MCF 10A (cell line): ENCODE measurements at regions of chr21 and their contacts with region 1.

Region 1: GRCh38 chr21:16330082-16330907 is 600.5 kb downstream of the USP25 start:
- DNase-seq: peak; percentile 77
- H3K4me3 Mint-ChIP-seq: no peak overlapping the region
- H3K27ac Mint-ChIP-seq: no peak overlapping the region
- H3K4me1 Mint-ChIP-seq: peaks cover 5% of the 10 kb centered on the region
- H3K27me3 Mint-ChIP-seq: no peaks in the 10 kb centered on the region
- CTCF ChIP-seq: peak; percentile 42

Region 2: GRCh38 chr21:15874615-15875014 is 455.7 kb before region 1 on chr21:
- CTCF ChIA-PET with region 1: no interaction called
- POLR2A ChIA-PET with region 1: no interaction called
- intact Hi-C with region 1: no loop called
- DNase-seq: no peak
- H3K4me3 Mint-ChIP-seq: no peak overlapping the region
- H3K27ac Mint-ChIP-seq: no peak overlapping the region
- H3K4me1 Mint-ChIP-seq: no peaks in the 10 kb centered on the region
- H3K27me3 Mint-ChIP-seq: no peaks in the 10 kb centered on the region
- CTCF ChIP-seq: no peak

Region 3: GRCh38 chr21:16002874-16003466 is 327.3 kb before region 1 on chr21:
- CTCF ChIA-PET with region 1: interaction called, 9 read pairs
- POLR2A ChIA-PET with region 1: no interaction called
- intact Hi-C with region 1: loop called (anchors 1 kb)
- DNase-seq: peak; percentile 18
- H3K4me3 Mint-ChIP-seq: no peak overlapping the region
- H3K27ac Mint-ChIP-seq: no peak overlapping the region
- H3K4me1 Mint-ChIP-seq: no peaks in the 10 kb centered on the region
- H3K27me3 Mint-ChIP-seq: no peaks in the 10 kb centered on the region
- CTCF ChIP-seq: peak; percentile 31

Region 4: GRCh38 chr21:16082038-16082816 is 248.1 kb before region 1 on chr21:
- CTCF ChIA-PET with region 1: interaction called, 48 read pairs
- POLR2A ChIA-PET with region 1: interaction called, 7 read pairs
- intact Hi-C with region 1: loop called (anchors 1 kb)
- DNase-seq: peak; percentile 17
- H3K4me3 Mint-ChIP-seq: no peak overlapping the region
- H3K27ac Mint-ChIP-seq: no peak overlapping the region
- H3K4me1 Mint-ChIP-seq: peaks cover 7% of the 10 kb centered on the region
- H3K27me3 Mint-ChIP-seq: peaks cover 11% of the 10 kb centered on the region
- CTCF ChIP-seq: peak; percentile 29

Region 5: GRCh38 chr21:16342932-16343331 is 12.6 kb after region 1 on chr21:
- CTCF ChIA-PET with region 1: interaction called, 10 read pairs
- POLR2A ChIA-PET with region 1: interaction called, 3 read pairs
- intact Hi-C with region 1: no loop called
- DNase-seq: no peak
- H3K4me3 Mint-ChIP-seq: no peak overlapping the region
- H3K27ac Mint-ChIP-seq: no peak overlapping the region
- H3K4me1 Mint-ChIP-seq: no peaks in the 10 kb centered on the region
- H3K27me3 Mint-ChIP-seq: peaks cover 9% of the 10 kb centered on the region
- CTCF ChIP-seq: no peak

Region 6: DNA sequence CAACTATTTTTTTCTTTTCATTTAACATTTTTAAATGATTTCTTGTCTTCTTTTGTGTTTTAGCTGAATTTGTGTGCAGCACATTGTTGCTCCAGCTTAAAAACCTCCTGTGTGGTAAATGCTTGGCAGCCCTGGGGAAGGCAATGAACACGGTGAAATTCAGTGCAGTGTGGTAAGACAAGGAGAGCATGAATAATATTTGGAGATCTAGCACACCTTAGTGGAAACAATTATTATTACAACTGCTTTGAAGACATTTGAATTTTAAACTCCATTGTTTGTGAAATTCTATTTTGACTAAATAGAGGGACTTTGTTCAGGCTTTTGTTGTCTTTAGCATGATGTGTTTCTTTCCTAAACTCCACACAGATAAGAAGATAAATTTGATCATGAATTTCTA is 939.9 kb after region 1 on chr21:
- CTCF ChIA-PET with region 1: interaction called, 4 read pairs
- POLR2A ChIA-PET with region 1: no interaction called
- intact Hi-C with region 1: loop called (anchors 5 kb)
- DNase-seq: peak; percentile 52
- H3K4me3 Mint-ChIP-seq: no peak overlapping the region
- H3K27ac Mint-ChIP-seq: no peak overlapping the region
- H3K4me1 Mint-ChIP-seq: no peaks in the 10 kb centered on the region
- H3K27me3 Mint-ChIP-seq: no peaks in the 10 kb centered on the region
- CTCF ChIP-seq: peak; percentile 70